Endothelial cell of umbilical vein (primary cell): ENCODE measurements at regions of chr5 and their contacts with region 1.

Region 1: DNA sequence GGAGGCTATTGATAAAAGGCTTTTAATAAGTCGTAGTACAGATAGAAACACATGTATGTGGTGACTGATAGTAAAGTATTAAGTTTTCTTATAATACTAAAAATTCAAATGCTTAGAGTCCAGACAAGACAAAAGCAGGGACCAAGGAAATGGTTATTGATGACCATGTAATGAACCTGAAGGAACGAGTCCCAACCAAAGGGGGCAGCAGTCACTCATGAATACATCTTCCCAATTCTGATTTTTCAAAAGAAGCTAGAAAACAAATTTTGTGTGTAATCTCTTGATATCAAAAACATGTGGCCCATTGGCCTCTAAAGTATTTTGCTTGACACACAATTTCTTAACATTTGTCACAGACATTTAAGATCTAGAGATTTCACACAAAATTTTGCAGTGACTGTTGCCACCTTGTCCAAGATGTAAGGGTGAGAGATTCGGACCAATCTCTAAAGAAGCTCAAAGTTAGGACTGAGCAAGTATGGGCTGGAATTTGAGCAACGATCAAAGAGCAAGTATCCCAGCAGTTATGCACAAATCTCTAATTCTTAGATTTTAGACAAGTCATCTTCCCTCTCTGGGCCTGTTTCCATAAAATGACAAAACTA is 66.8 kb downstream of the ARL15 start:
- DNase-seq: peak; percentile 47
- H3K4me3 ChIP-seq: no peak overlapping the region
- H3K27ac ChIP-seq: no peak overlapping the region
- H3K4me1 ChIP-seq: peaks cover 14% of the 10 kb centered on the region
- H3K27me3 ChIP-seq: peaks cover 0 to 1% of the 10 kb centered on the region in 2 experiments
- CTCF ChIP-seq: peak; percentile 44 to 48
- POLR2A ChIP-seq: no peak

Region 2: GRCh38 chr5:54254482-54255198 is 11.1 kb after region 1 on chr5:
- CTCF ChIA-PET with region 1: interaction called, 14 read pairs
- POLR2A ChIA-PET with region 1: no interaction called
- dilution Hi-C with region 1: no loop called
- intact Hi-C with region 1: no loop called
- DNase-seq: peak; percentile 44
- H3K4me3 ChIP-seq: no peak overlapping the region
- H3K27ac ChIP-seq: no peak overlapping the region
- H3K4me1 ChIP-seq: no peaks in the 10 kb centered on the region
- H3K27me3 ChIP-seq: no peaks in the 10 kb centered on the region
- CTCF ChIP-seq: peak in 1 of 2 donors; percentile 15
- POLR2A ChIP-seq: no peak

Region 3: DNA sequence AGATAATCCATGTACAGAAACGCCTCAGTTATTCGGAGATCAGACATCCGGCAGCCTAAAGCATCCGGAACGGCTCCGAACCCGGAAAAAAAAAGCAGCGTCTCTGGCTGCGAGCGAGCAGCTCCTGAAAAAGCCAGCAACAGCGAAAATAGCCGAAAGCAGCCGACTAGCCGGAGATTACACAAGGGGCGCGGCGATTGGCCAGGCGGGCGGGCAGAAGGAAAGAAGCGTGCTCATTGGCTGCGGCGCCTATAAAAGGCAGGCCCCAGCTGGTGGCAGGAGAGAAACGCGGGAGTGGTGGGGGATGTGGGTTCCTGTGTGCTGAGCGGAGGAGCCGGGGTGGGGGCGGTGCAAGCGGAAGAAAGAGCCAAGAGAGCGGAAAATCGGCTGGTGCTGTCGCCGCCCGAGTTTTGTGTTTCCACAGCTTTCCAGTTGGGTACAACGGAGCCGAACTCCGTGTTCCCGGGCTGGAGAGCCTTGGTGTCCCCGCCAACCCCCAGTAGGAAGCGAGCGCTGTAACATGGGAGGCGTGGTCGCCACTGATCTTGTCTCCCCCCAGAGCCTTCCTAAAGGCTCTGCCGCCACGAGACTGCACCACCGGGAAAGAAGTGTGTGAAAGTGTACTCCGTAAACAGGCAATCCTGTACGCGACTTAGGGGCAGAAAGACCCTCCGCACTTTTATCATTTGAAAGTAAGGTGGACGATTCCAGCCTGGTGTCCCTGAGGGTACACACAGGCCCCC is 67.0 kb after region 1 on chr5 and contains the start of gene ARL15:
- CTCF ChIA-PET with region 1: interaction called, 25 read pairs
- POLR2A ChIA-PET with region 1: interaction called, 7 read pairs
- dilution Hi-C with region 1: no loop called
- intact Hi-C with region 1: loop called (anchors 2 kb)
- DNase-seq: peak; percentile 98
- H3K4me3 ChIP-seq: peak within 1 kb of the TSS; percentile 83 to 95 (median 88)
- H3K27ac ChIP-seq: peak within 1 kb of the TSS; percentile 45
- H3K4me1 ChIP-seq: peaks cover 24% of the 10 kb centered on the region
- H3K27me3 ChIP-seq: peaks cover 8 to 11% of the 10 kb centered on the region in 2 experiments
- CTCF ChIP-seq: no peak
- POLR2A ChIP-seq: peak; percentile 99
- total RNA-seq, gene ARL15: 24.4 and 27.3 TPM in 2 replicates

Region 4: DNA sequence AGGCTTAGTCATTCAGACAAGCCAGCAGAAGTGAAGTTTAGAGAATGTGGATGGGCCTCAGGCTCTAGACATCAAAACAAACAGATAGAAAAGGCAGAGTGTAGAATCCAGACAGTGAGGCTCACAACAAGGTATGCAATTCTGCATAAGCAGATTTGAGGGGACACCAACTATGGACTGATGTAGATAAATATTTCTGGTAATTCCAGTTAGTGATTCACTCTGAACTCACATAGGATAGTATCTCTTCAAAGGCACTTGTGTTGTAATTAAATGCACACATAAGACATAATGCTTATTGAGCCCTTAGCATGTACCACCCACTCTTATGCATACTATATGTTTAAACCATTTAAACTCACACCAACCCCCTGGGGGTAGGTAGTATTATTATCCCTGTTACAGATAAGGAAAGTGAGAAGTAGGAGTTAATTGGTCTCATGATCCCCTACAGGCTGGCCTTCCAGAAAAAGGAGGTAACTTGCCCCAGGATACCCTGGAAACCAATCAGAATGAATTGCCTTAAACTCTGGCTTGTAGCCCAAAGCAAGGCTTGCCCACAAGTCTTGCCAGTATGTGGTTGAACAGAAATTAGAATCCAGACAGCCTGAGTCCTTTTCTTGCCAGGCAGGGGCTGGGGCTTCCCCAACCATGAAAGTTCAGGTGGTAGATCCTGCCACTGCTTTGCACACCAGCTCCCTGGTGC is 172.5 kb after region 1 on chr5:
- CTCF ChIA-PET with region 1: interaction called, 151 read pairs
- POLR2A ChIA-PET with region 1: no interaction called
- dilution Hi-C with region 1: no loop called
- intact Hi-C with region 1: loop called (anchors 1 kb)
- DNase-seq: no peak
- H3K4me3 ChIP-seq: no peak overlapping the region
- H3K27ac ChIP-seq: no peak overlapping the region
- H3K4me1 ChIP-seq: no peaks in the 10 kb centered on the region
- H3K27me3 ChIP-seq: peaks cover 8 to 12% of the 10 kb centered on the region in 2 experiments
- CTCF ChIP-seq: no peak
- POLR2A ChIP-seq: no peak

Region 5: DNA sequence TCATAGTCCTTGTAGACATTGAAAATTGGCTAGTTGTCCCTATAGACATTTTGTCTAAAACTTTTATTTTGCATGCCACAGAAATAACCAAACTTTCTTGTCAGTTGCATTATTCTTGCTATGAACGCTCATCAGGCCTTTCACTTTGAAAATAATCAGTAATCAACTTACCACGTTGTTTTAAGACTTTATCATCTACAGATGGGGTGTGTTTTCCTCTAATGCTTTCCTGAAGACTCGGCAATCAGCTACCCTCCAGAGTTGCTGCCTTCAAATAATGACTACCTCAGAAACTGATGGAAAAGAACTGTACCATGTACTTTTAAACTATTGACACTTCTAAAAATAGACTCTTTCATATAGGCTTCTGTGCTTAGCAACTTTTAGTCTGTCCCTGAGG is 178.4 kb after region 1 on chr5:
- CTCF ChIA-PET with region 1: interaction called, 151 read pairs
- POLR2A ChIA-PET with region 1: no interaction called
- dilution Hi-C with region 1: no loop called
- intact Hi-C with region 1: loop called (anchors 1 kb)
- DNase-seq: no peak
- H3K4me3 ChIP-seq: no peak overlapping the region
- H3K27ac ChIP-seq: no peak overlapping the region
- H3K4me1 ChIP-seq: no peaks in the 10 kb centered on the region
- H3K27me3 ChIP-seq: peaks cover 9 to 18% of the 10 kb centered on the region in 2 experiments
- CTCF ChIP-seq: no peak
- POLR2A ChIP-seq: no peak

Region 6: GRCh38 chr5:54463713-54464112 is 220.1 kb after region 1 on chr5:
- CTCF ChIA-PET with region 1: no interaction called
- POLR2A ChIA-PET with region 1: no interaction called
- dilution Hi-C with region 1: no loop called
- intact Hi-C with region 1: no loop called
- DNase-seq: no peak
- H3K4me3 ChIP-seq: no peak overlapping the region
- H3K27ac ChIP-seq: no peak overlapping the region
- H3K4me1 ChIP-seq: no peaks in the 10 kb centered on the region
- H3K27me3 ChIP-seq: peaks cover 0 to 2% of the 10 kb centered on the region in 2 experiments
- CTCF ChIP-seq: no peak
- POLR2A ChIP-seq: no peak

Region 7: DNA sequence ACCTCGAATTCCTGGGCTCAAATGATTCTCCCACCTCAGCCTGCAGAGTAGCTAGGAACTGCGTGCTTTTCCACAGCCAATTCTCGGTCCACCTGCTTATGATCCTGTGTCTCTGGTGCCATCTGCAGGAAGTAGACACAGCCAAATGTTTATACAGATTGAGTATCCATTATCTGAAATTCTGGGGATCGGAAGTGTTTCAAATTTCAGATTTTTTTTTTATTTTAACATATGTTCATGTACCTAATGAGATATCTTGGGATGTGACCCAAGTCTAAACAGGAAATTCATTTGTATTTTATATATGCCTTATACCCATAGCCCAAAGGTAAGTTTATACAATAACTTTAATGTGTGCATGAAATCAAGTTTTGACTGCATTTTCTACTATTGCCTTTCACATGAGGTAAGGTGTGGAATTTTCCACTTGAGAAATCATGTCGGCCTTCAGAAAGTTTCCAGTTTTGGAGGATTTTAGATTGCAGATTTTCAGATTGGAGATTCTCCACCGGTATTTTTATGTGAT is 652.3 kb after region 1 on chr5:
- CTCF ChIA-PET with region 1: interaction called, 20 read pairs
- POLR2A ChIA-PET with region 1: no interaction called
- dilution Hi-C with region 1: no loop called
- intact Hi-C with region 1: no loop called
- DNase-seq: peak; percentile 40
- H3K4me3 ChIP-seq: no peak overlapping the region
- H3K27ac ChIP-seq: no peak overlapping the region
- H3K4me1 ChIP-seq: peaks cover 1% of the 10 kb centered on the region
- H3K27me3 ChIP-seq: peaks cover 0 to 2% of the 10 kb centered on the region in 2 experiments
- CTCF ChIP-seq: peak; percentile 7 to 10
- POLR2A ChIP-seq: no peak